MCF 10A (cell line): ENCODE measurements at regions of chr3 and their contacts with region 1.

Region 1: GRCh38 chr3:131381444-131382291 is at the start of gene NUDT16:
- DNase-seq: peak; percentile 99
- H3K4me3 Mint-ChIP-seq: peak within 1 kb of the TSS; percentile 88
- H3K27ac Mint-ChIP-seq: peak within 1 kb of the TSS; percentile 87
- H3K4me1 Mint-ChIP-seq: peaks cover 19% of the 10 kb centered on the region
- H3K27me3 Mint-ChIP-seq: no peaks in the 10 kb centered on the region
- CTCF ChIP-seq: peak; percentile 9
- total RNA-seq, gene NUDT16: 12.0 and 13.0 TPM in 2 replicates

Region 2: GRCh38 chr3:131033480-131034080 is 348.1 kb before region 1 on chr3:
- CTCF ChIA-PET with region 1: interaction called, 4 read pairs
- POLR2A ChIA-PET with region 1: interaction called, 4 read pairs
- intact Hi-C with region 1: loop called (anchors 2 kb)
- DNase-seq: peak; percentile 56
- H3K4me3 Mint-ChIP-seq: no peak overlapping the region
- H3K27ac Mint-ChIP-seq: no peak overlapping the region
- H3K4me1 Mint-ChIP-seq: peaks cover 7% of the 10 kb centered on the region
- H3K27me3 Mint-ChIP-seq: no peaks in the 10 kb centered on the region
- CTCF ChIP-seq: peak; percentile 67

Region 3: DNA sequence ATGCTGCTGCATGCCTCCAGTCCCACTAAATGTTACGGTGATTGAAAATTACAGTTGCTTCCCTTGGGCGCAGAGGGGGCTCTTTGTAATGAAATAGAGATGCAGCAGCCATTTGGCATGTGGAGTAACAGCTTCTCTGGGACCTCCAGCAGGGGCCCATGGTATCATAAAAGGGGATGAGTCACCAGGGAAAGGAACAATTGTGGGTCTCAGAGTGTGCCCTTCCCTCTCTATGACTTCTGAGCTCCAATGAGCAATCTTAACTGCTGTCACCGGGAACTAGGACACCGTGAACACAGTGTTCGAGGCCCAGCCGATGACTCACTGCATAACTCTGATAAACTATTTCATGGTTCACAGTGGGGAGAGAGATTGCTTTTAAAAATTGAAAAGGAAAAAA is 164.9 kb before region 1 on chr3:
- CTCF ChIA-PET with region 1: no interaction called
- POLR2A ChIA-PET with region 1: interaction called, 3 read pairs
- intact Hi-C with region 1: loop called (anchors 10 kb)
- DNase-seq: peak; percentile 63
- H3K4me3 Mint-ChIP-seq: peak overlapping the region; percentile 50
- H3K27ac Mint-ChIP-seq: peak overlapping the region; percentile 68
- H3K4me1 Mint-ChIP-seq: peaks cover 19% of the 10 kb centered on the region
- H3K27me3 Mint-ChIP-seq: no peaks in the 10 kb centered on the region
- CTCF ChIP-seq: no peak

Region 4: DNA sequence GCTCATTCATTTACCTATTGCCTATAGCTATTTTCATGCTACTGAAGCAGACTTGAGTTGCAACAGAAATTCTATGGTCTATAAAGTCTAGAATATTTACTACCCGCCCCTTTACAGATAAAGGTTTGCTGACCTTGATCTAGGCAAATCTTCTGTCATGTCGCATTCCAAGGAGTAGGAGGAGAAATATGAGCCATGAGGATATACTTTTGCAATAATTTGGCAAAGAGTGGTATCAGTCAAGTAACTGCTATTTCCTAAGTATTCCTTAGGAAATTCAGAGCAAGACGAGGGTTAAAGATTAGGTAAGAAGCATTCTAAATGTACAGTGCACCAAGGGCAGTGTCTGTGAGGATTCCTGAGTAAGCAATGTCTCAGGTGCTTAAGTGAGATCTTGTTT is 121.1 kb before region 1 on chr3:
- CTCF ChIA-PET with region 1: no interaction called
- POLR2A ChIA-PET with region 1: interaction called, 17 read pairs
- intact Hi-C with region 1: no loop called
- DNase-seq: peak; percentile 69
- H3K4me3 Mint-ChIP-seq: no peak overlapping the region
- H3K27ac Mint-ChIP-seq: peak overlapping the region; percentile 72
- H3K4me1 Mint-ChIP-seq: no peaks in the 10 kb centered on the region
- H3K27me3 Mint-ChIP-seq: no peaks in the 10 kb centered on the region
- CTCF ChIP-seq: no peak

Region 5: GRCh38 chr3:131349946-131350347 is 31.7 kb before region 1 on chr3:
- CTCF ChIA-PET with region 1: interaction called, 5 read pairs
- POLR2A ChIA-PET with region 1: interaction called, 12 read pairs
- intact Hi-C with region 1: no loop called
- DNase-seq: peak; percentile 73
- H3K4me3 Mint-ChIP-seq: no peak overlapping the region
- H3K27ac Mint-ChIP-seq: peak overlapping the region; percentile 61
- H3K4me1 Mint-ChIP-seq: peaks cover 26% of the 10 kb centered on the region
- H3K27me3 Mint-ChIP-seq: no peaks in the 10 kb centered on the region
- CTCF ChIP-seq: no peak

Region 6: GRCh38 chr3:131402391-131403039 is 20.8 kb after region 1 on chr3:
- CTCF ChIA-PET with region 1: interaction called, 3 read pairs
- POLR2A ChIA-PET with region 1: interaction called, 14 read pairs
- intact Hi-C with region 1: no loop called
- DNase-seq: peak; percentile 10
- H3K4me3 Mint-ChIP-seq: no peak overlapping the region
- H3K27ac Mint-ChIP-seq: no peak overlapping the region
- H3K4me1 Mint-ChIP-seq: peaks cover 9% of the 10 kb centered on the region
- H3K27me3 Mint-ChIP-seq: no peaks in the 10 kb centered on the region
- CTCF ChIP-seq: no peak

Region 7: GRCh38 chr3:131502530-131503245 is 121.0 kb after region 1 on chr3 and contains the start of gene MRPL3:
- CTCF ChIA-PET with region 1: no interaction called
- POLR2A ChIA-PET with region 1: interaction called, 11 read pairs
- intact Hi-C with region 1: loop called (anchors 5 kb)
- DNase-seq: peak; percentile 86
- H3K4me3 Mint-ChIP-seq: peak within 1 kb of the TSS; percentile 95
- H3K27ac Mint-ChIP-seq: peak within 1 kb of the TSS; percentile 91
- H3K4me1 Mint-ChIP-seq: peaks cover 21% of the 10 kb centered on the region
- H3K27me3 Mint-ChIP-seq: no peaks in the 10 kb centered on the region
- CTCF ChIP-seq: no peak
- total RNA-seq, gene MRPL3: 138 and 179 TPM in 2 replicates